ENCODE measurements at regions of chr5 and their contacts with region 1.

Region 1: DNA sequence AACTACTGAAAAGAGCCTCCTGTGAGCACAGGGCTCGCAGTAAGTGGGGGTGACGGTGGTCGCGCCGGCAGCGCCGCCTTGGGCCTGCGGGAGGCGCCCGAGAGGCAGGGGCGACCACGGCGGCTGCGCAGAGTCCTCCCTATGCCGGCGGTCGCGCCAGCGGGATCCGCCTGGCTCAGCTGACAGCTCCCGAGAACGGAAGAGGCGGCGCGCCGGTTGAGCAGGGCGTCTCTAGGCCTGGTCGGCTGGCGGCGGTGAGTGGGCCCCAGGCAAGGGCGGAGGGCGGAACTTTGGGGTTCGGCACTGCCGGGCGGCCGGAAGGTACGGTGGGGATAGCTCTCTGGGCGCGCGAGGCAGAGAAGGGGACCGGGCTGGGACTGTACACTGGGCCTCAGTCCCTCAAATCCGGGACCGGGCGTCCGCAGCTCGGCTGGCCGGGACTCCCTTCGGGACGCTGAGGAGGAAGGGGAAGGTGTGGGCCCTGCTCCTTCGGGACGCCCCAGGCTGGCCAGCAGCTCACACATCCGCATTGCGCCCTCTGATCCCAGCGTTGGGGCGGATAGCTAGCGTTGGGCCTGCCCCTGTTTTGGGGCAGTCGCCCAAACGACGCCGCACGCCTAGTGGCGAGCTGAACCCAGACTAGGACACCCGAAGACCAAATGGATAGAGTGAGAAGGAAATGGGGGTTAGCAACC is at the start of gene RNF14:
- DNase-seq: peak; percentile 86 to 94
- ATAC-seq: peak; percentile 96 to 99
- H3K4me3 ChIP-seq: peak within 1 kb of the TSS; percentile 85
- H3K27ac ChIP-seq: peak within 1 kb of the TSS; percentile 94 to 96
- H3K4me1 ChIP-seq: peaks cover 22% of the 10 kb centered on the region
- CTCF ChIP-seq: peak; percentile 89
- EP300 ChIP-seq: no peak
- POLR2A ChIP-seq: peak; percentile 78
- RAD21 ChIP-seq: 0 out of 5 replicates have a peak, but pooled peaks of 1 of the 2 experiments have one; percentile 4
- polyA plus RNA-seq, gene RNF14: 47.4 and 57.5 TPM in 2 replicates

Region 2: GRCh38 chr5:141664732-141665461 is 304.2 kb before region 1 on chr5:
- CTCF ChIA-PET with region 1: interaction called, 12 read pairs
- POLR2A ChIA-PET with region 1: no interaction called
- DNase-seq: peak; percentile 69 to 78
- ATAC-seq: peak; percentile 89 to 97
- H3K4me3 ChIP-seq: no peak overlapping the region
- H3K27ac ChIP-seq: no peak overlapping the region
- H3K4me1 ChIP-seq: peaks cover 4% of the 10 kb centered on the region; the same call in 1 of the 3 replicates
- CTCF ChIP-seq: peak; percentile 91
- EP300 ChIP-seq: no peak
- POLR2A ChIP-seq: no peak
- RAD21 ChIP-seq: peak; percentile 84

Region 3: DNA sequence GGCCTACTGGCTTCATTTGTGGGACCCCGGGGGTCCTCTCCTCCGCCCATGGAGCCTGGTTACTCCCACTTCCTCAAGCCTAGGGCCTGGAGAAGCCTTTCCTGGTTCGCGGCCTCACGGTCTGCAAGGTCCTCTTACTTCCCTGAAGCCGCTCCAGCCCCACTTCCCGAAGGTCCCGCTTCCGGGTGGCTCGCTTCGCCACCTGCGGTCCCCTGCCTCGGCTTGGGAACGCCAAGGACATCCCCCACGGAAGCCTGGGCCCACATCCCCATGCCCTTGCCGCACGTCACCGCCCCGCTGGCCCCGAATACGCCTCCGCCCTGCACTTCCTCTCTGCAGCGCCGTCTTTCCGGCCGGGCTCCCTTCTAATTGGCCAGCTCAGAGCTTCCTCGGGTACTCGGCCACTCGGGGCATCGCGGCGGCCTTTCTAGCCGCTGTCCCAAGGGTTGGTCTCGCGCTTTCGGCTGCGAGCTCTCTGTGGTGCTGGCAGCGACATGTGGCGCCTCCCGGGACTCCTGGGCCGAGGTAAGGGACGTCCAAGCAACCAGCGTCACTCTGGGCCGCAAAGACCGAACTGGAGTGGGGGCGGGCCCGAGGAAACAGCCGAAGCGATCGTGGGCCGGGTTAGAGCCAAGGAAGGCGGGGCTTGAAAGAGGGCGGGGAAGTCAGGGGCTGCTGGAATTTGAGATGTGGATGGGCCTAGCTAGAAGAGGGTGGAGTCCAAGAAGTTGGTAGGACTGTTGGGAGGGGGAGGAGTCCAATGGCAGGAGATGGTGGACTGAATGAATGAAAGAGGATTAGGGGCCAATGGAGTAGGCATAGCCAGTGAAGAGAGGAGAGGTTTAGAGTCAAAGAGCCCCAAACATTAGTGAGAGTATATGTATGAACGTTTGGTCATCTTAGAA is 45.4 kb before region 1 on chr5 and contains the start of gene DELE1:
- CTCF ChIA-PET with region 1: interaction called, 9 read pairs
- POLR2A ChIA-PET with region 1: interaction called, 16 read pairs
- DNase-seq: peak; percentile 95 to 96
- ATAC-seq: peak; percentile 98 to 99
- H3K4me3 ChIP-seq: peak within 1 kb of the TSS; percentile 89
- H3K27ac ChIP-seq: peak within 1 kb of the TSS; percentile 92 to 99
- H3K4me1 ChIP-seq: peaks cover 12% of the 10 kb centered on the region
- CTCF ChIP-seq: no peak
- EP300 ChIP-seq: no peak
- POLR2A ChIP-seq: peak; percentile 80
- RAD21 ChIP-seq: no peak
- polyA plus RNA-seq, gene DELE1: 60.1 and 72.2 TPM in 2 replicates

Region 4: DNA sequence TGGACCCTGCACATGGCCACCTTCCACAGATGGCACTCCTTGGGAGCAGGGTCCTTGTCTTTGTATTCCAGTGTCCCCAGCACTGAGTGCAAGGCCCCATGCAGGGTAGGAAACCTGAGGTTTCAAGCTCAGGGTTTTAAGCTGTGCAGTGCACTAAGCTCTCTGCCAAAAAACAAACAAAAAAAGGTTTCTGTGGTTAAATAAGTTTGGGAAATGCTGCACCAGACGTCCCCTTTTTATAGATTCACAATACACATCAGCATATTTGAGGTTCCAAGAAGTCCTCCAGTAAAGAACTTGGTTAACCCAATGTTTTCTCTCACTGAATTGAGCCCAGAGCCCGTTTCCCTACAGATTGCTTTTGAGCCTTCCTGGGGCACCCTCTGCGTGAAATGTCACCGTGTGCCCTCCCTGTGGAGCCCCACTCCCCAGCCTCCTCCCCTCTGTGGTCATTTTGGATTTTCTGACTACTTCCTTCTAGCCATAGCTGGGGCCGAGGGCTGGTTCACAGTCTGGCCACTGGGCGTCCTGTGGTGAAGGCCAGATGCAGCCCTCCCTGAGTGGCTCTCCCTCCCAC is 28.3 kb before region 1 on chr5:
- CTCF ChIA-PET with region 1: interaction called, 18 read pairs
- POLR2A ChIA-PET with region 1: interaction called, 4 read pairs
- DNase-seq: peak in 1 of 2 experiments; percentile 23
- ATAC-seq: peak; percentile 75 to 79
- H3K4me3 ChIP-seq: no peak overlapping the region
- H3K27ac ChIP-seq: peak overlapping the region in 1 of 2 experiments; percentile 29; a peak in 1 of 6 replicates
- H3K4me1 ChIP-seq: peaks cover 9% of the 10 kb centered on the region; the same call in 2 of the 3 replicates
- CTCF ChIP-seq: no peak
- EP300 ChIP-seq: no peak
- POLR2A ChIP-seq: no peak
- RAD21 ChIP-seq: no peak

Region 5: DNA sequence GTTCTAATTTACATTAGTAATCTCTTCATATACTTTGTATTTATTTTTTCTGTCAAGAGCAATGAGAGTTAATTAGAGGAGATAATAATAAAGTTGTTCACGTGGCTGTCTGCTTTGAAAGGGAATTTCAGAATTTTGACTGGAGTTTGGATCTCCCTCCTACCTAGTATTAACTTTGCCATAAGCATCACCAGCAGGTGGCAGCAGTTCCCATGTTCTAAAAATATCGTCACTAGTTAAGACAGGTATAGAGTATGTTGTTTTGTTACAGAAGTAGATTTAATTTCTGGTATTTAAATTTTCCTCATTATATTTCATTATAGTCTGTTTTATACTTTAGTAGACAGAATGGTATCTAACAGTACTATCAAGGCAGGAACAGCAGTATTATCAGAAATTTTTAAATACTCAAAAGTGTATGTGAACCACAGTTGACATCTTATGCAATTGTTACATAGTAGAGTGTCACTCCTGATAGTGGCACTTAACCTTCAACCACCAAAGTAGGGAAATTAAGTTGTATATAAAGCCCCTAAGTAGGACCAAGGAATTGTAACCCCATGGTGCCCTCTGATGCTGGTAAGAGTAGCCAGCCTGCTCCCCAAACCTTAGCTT is 23.4 kb after region 1 on chr5:
- CTCF ChIA-PET with region 1: interaction called, 18 read pairs
- POLR2A ChIA-PET with region 1: interaction called, 7 read pairs
- DNase-seq: peak; percentile 64
- ATAC-seq: peak; percentile 74 to 93; a peak in 4 of 6 replicates
- H3K4me3 ChIP-seq: no peak overlapping the region
- H3K27ac ChIP-seq: no peak overlapping the region
- H3K4me1 ChIP-seq: no peaks in the 10 kb centered on the region
- CTCF ChIP-seq: peak; percentile 84
- EP300 ChIP-seq: no peak
- POLR2A ChIP-seq: no peak
- RAD21 ChIP-seq: peak; percentile 62 to 64

Region 6: DNA sequence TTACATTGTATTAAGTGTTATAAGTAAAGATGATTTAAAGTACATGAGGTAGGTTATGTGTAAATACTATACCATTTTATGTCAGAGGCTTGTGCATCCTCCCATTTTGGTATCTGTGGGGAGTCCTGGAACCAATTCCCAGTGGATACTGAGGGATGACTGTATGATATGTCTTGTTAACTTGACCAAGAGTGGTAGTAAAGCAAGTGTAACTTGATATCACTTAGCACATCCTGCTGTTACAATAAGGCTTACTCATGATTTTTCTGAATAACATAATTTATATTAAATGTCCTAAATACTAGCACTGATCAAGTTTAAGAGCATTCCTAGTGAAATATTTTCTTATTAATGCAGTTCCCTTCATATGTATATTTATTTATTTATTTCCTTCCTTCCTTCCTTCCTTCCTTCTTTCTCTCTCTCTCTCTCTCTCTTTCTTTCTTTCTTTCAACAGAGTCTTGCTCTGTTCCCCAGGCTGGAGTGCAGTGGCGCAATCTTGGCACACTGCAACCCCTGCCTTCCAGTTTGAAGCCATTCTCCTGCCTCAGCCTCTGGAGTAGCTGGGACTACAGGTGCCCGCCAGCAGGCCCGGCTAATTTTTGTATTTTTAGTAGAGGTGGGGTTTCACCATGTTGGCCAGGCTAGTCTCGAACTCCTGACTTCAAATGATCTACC is 147.0 kb after region 1 on chr5:
- CTCF ChIA-PET with region 1: no interaction called
- POLR2A ChIA-PET with region 1: no interaction called
- DNase-seq: no peak
- ATAC-seq: no peak
- H3K4me3 ChIP-seq: no peak overlapping the region
- H3K27ac ChIP-seq: no peak overlapping the region
- H3K4me1 ChIP-seq: peaks cover 13% of the 10 kb centered on the region; the same call in 1 of the 3 replicates
- CTCF ChIP-seq: no peak
- EP300 ChIP-seq: no peak
- POLR2A ChIP-seq: no peak
- RAD21 ChIP-seq: no peak

Measured in A549 (cell line).